Thyroid gland (tissue), 4 donors: ENCODE measurements at regions of chr2 and their contacts with region 1.

Region 1: GRCh38 chr2:190648289-190649034 is 421 bp upstream of the NAB1 start:
- DNase-seq: peak; percentile 91 to 92
- H3K4me3 ChIP-seq: peak overlapping the region; percentile 30 to 91 (median 90)
- H3K27ac ChIP-seq: peak overlapping the region; percentile 79 to 96 (median 89)
- H3K4me1 ChIP-seq: peaks cover 6 to 17% of the 10 kb centered on the region in 2 donors
- H3K27me3 ChIP-seq: no peaks in the 10 kb centered on the region
- CTCF ChIP-seq: no peak
- POLR2A ChIP-seq: peak in 1 of 2 donors; percentile 80

Region 2: GRCh38 chr2:190534310-190535120 is 113.9 kb before region 1 on chr2 and contains the start of gene NEMP2:
- intact Hi-C with region 1: loop called (anchors 10 kb)
- DNase-seq: peak; percentile 72 to 81
- H3K4me3 ChIP-seq: peak within 1 kb of the TSS; percentile 73 to 86 (median 79)
- H3K27ac ChIP-seq: peak within 1 kb of the TSS; percentile 97 to 99 (median 98)
- H3K4me1 ChIP-seq: peaks cover 6 to 14% of the 10 kb centered on the region in 2 donors
- H3K27me3 ChIP-seq: no peaks in the 10 kb centered on the region
- CTCF ChIP-seq: peak in 1 of 6 experiments; percentile 10
- POLR2A ChIP-seq: peak; percentile 23 to 85
- total RNA-seq, gene NEMP2: 5.6 to 9.0 (median 7.3) TPM